Breast epithelium (tissue), 4 donors: ENCODE measurements at regions of chr11 and their contacts with region 1.

Region 1: GRCh38 chr11:91047882-91048281 is 825.0 kb upstream of the CHORDC1 start:
- DNase-seq: no peak
- H3K4me3 ChIP-seq: no peak overlapping the region
- H3K27ac ChIP-seq: no peak overlapping the region
- H3K4me1 ChIP-seq: no peaks in the 10 kb centered on the region
- H3K27me3 ChIP-seq: no peaks in the 10 kb centered on the region
- CTCF ChIP-seq: no peak
- POLR2A ChIP-seq: no peak

Region 2: GRCh38 chr11:90849278-90849677 is 198.6 kb before region 1 on chr11:
- intact Hi-C with region 1: no loop called
- DNase-seq: no peak
- H3K4me3 ChIP-seq: no peak overlapping the region
- H3K27ac ChIP-seq: no peak overlapping the region
- H3K4me1 ChIP-seq: no peaks in the 10 kb centered on the region
- H3K27me3 ChIP-seq: no peaks in the 10 kb centered on the region
- CTCF ChIP-seq: no peak
- POLR2A ChIP-seq: no peak

Region 3: DNA sequence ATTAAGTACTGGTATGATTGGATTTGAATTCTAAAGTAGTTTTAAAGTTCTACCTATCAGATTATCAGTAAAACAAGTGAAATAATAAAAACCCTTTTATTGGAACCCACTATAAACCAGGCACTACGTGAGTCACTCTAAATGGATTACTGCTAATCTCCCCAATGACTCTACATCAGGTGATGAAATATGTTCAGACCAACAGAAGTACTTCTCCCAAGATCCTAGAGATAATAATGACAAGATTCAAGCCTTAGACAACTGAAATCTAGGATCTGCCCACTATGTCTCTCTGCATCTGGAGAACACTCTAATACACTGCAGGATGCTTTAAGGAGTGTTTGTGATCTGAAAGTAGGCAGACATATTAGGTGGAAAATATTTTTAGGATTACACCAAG is 172.9 kb before region 1 on chr11:
- intact Hi-C with region 1: loop called (anchors 5 kb)
- DNase-seq: no peak
- H3K4me3 ChIP-seq: no peak overlapping the region
- H3K27ac ChIP-seq: no peak overlapping the region
- H3K4me1 ChIP-seq: no peaks in the 10 kb centered on the region
- H3K27me3 ChIP-seq: no peaks in the 10 kb centered on the region
- CTCF ChIP-seq: no peak
- POLR2A ChIP-seq: no peak